ENCODE measurements at regions of chr12 and their contacts with region 1.

Region 1: DNA sequence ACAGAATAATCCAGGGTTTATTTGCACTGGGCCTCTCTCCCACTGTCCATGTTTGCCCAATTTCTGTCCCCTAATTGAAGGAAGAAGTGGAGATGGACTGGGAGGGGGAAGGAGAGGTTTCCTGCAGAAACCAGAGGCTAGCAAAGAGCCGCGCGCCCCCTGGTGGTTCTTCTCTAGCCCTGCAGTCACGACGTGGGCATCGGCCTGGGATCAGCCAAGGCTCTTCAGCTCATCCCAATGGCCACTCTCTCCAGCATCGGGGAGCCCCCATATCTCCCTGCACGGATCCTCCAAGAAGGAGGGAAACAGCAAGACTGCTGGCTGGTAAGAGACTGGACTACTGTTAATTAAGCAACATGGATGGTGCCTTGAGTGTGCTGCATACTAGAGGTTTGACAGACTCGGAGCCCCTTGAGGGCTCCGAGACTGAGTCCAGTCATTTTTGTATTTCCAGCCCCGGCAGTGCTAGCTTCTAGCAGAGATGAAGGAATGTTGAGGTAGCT is 18.7 kb downstream of the ZBTB39 start:
- DNase-seq: peak; percentile 73 to 89 (median 85)
- H3K4me3 ChIP-seq: no peak overlapping the region
- H3K27ac ChIP-seq: no peak overlapping the region
- H3K4me1 ChIP-seq: no peaks in the 10 kb centered on the region
- H3K27me3 ChIP-seq: no peaks in the 10 kb centered on the region
- CTCF ChIP-seq: peak; percentile 60 to 87 (median 86)
- EP300 ChIP-seq: no peak
- POLR2A ChIP-seq: no peak

Region 2: GRCh38 chr12:56751712-56752598 is 235.6 kb before region 1 on chr12 and contains the start of gene PRIM1:
- intact Hi-C with region 1: loop called in 2 of 4 experiments (anchors 2 to 5 kb)
- DNase-seq: peak; percentile 75 to 88 (median 83)
- H3K4me3 ChIP-seq: peak within 1 kb of the TSS; percentile 90
- H3K27ac ChIP-seq: peak within 1 kb of the TSS in 1 of 2 donors; percentile 22
- H3K4me1 ChIP-seq: no peaks in the 10 kb centered on the region
- H3K27me3 ChIP-seq: no peaks in the 10 kb centered on the region
- CTCF ChIP-seq: peak in 1 of 3 donors; percentile 32
- EP300 ChIP-seq: no peak
- POLR2A ChIP-seq: no peak
- total RNA-seq, gene PRIM1: 5.7 to 12.5 (median 7.7) TPM

Region 3: DNA sequence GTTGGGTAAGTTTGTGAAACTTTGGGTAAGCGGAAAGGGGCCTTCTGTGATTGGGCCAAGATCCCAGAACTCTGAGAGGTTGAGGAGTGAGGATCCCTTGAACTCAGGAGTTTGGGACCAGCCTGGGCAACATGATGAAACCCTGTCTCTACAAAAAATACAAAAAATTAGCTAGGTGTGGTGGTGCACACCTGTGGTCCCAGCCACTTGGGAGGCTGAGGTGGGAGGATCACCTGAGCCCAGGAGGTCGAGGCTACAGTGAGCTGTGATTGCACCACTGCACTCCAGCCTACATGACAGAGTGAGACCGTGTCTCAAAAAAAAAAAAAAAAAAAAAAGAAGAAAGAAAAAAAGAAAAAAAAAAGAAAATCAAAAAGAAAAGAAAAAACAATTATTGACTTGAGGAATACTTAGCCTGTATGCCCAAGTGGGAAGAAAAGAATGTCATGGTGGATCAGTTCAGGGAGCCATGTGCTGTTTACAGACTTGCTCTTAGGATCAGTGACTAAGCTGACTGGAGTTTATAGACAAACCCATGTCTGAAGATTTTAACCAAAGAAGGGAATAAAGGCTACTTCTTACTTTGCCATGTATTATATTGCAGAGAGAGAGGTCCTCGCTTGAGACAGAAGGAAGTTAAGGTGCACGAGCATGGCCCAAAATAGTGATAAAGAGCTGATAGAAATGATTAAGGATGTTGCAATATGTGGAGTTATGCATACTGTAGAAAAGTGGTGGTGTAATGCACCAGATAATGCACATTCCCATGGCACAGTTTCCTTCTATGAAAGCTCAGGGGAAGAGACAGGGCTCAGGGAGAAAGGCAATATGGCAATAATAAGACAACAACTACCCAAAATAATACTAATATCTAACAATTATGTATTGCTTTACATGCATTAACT is 223.6 kb before region 1 on chr12:
- intact Hi-C with region 1: loop called in 3 of 4 experiments (anchors 2 to 5 kb)
- DNase-seq: no peak
- H3K4me3 ChIP-seq: peak overlapping the region; percentile 16
- H3K27ac ChIP-seq: no peak overlapping the region
- H3K4me1 ChIP-seq: no peaks in the 10 kb centered on the region
- H3K27me3 ChIP-seq: no peaks in the 10 kb centered on the region
- CTCF ChIP-seq: no peak
- EP300 ChIP-seq: no peak
- POLR2A ChIP-seq: no peak

Region 4: GRCh38 chr12:57063991-57064685 is 76.5 kb after region 1 on chr12:
- intact Hi-C with region 1: no loop called
- DNase-seq: no peak
- H3K4me3 ChIP-seq: no peak overlapping the region
- H3K27ac ChIP-seq: no peak overlapping the region
- H3K4me1 ChIP-seq: no peaks in the 10 kb centered on the region
- H3K27me3 ChIP-seq: no peaks in the 10 kb centered on the region
- CTCF ChIP-seq: no peak
- EP300 ChIP-seq: no peak
- POLR2A ChIP-seq: no peak

Measured in ovary (tissue), 10 donors.